GM12878 (cell line): ENCODE measurements at regions of chr17 and their contacts with region 1.

Region 1: GRCh38 chr17:27760069-27760885 is 40.1 kb downstream of the NOS2 start:
- DNase-seq: no peak
- ATAC-seq: peak; percentile 84
- H3K4me3 ChIP-seq: no peak overlapping the region
- H3K27ac ChIP-seq: no peak overlapping the region
- H3K4me1 ChIP-seq: no peaks in the 10 kb centered on the region
- H3K27me3 ChIP-seq: no peaks in the 10 kb centered on the region
- CTCF ChIP-seq: peak; percentile 76 to 91 (median 78)
- EP300 ChIP-seq: no peak
- POLR2A ChIP-seq: no peak
- RAD21 ChIP-seq: peak; percentile 62

Region 2: GRCh38 chr17:28252436-28252835 is 492.2 kb after region 1 on chr17:
- CTCF ChIA-PET with region 1: interaction called, 14 read pairs
- POLR2A ChIA-PET with region 1: no interaction called
- RAD21 ChIA-PET with region 1: interaction called, 6 read pairs
- SMC1A ChIA-PET with region 1: no interaction called
- in situ Hi-C with region 1: no loop called
- intact Hi-C with region 1: loop called (anchors 1 kb)
- DNase-seq: no peak
- ATAC-seq: no peak
- H3K4me3 ChIP-seq: no peak overlapping the region
- H3K27ac ChIP-seq: no peak overlapping the region
- H3K4me1 ChIP-seq: no peaks in the 10 kb centered on the region
- H3K27me3 ChIP-seq: no peaks in the 10 kb centered on the region
- CTCF ChIP-seq: no peak
- EP300 ChIP-seq: no peak
- POLR2A ChIP-seq: no peak
- RAD21 ChIP-seq: no peak